ENCODE measurements at regions of chr12 and their contacts with region 1.

Region 1: GRCh38 chr12:12716793-12717585 is at the start of gene CDKN1B:
- DNase-seq: peak; percentile 92 to 95 (median 93)
- H3K4me3 ChIP-seq: peak within 1 kb of the TSS; percentile 70
- H3K27ac ChIP-seq: peak within 1 kb of the TSS; percentile 99 to 100
- H3K4me1 ChIP-seq: peaks cover 20% of the 10 kb centered on the region
- H3K27me3 ChIP-seq: no peaks in the 10 kb centered on the region
- CTCF ChIP-seq: no peak
- EP300 ChIP-seq: no peak
- POLR2A ChIP-seq: peak; percentile 57
- total RNA-seq, gene CDKN1B: 54.3 to 90.2 (median 76.8) TPM

Region 2: GRCh38 chr12:12673296-12673695 is 43.7 kb before region 1 on chr12:
- intact Hi-C with region 1: no loop called
- DNase-seq: no peak
- H3K4me3 ChIP-seq: no peak overlapping the region
- H3K27ac ChIP-seq: no peak overlapping the region
- H3K4me1 ChIP-seq: peaks cover 3% of the 10 kb centered on the region
- H3K27me3 ChIP-seq: no peaks in the 10 kb centered on the region
- CTCF ChIP-seq: no peak
- EP300 ChIP-seq: no peak
- POLR2A ChIP-seq: no peak

Region 3: GRCh38 chr12:12999959-13000615 is 283.1 kb after region 1 on chr12 and contains the start of gene HEBP1:
- intact Hi-C with region 1: loop called in 1 of 4 experiments (anchors 10 kb)
- DNase-seq: peak; percentile 96 to 99 (median 98)
- H3K4me3 ChIP-seq: peak within 1 kb of the TSS; percentile 62
- H3K27ac ChIP-seq: peak within 1 kb of the TSS; percentile 89 to 95
- H3K4me1 ChIP-seq: peaks cover 9% of the 10 kb centered on the region
- H3K27me3 ChIP-seq: no peaks in the 10 kb centered on the region
- CTCF ChIP-seq: peak in 1 of 3 donors; percentile 13
- EP300 ChIP-seq: no peak
- POLR2A ChIP-seq: peak; percentile 92
- total RNA-seq, gene HEBP1: 31.6 to 102 (median 83.7) TPM